Testis (tissue), 5 donors: ENCODE measurements at regions of chr12 and their contacts with region 1.

Region 1: GRCh38 chr12:27818401-27818918 is 38.4 kb upstream of the MANSC4 start:
- DNase-seq: peak; percentile 81
- H3K4me3 ChIP-seq: no peak overlapping the region
- H3K27ac ChIP-seq: peak overlapping the region; percentile 20 to 68
- H3K4me1 ChIP-seq: peaks cover 29% of the 10 kb centered on the region
- H3K27me3 ChIP-seq: no peaks in the 10 kb centered on the region
- CTCF ChIP-seq: no peak
- POLR2A ChIP-seq: no peak

Region 2: GRCh38 chr12:27747111-27747820 is 71.2 kb before region 1 on chr12:
- intact Hi-C with region 1: loop called (anchors 10 kb)
- DNase-seq: no peak
- H3K4me3 ChIP-seq: no peak overlapping the region
- H3K27ac ChIP-seq: peak overlapping the region; percentile 79 to 81
- H3K4me1 ChIP-seq: peaks cover 36% of the 10 kb centered on the region
- H3K27me3 ChIP-seq: no peaks in the 10 kb centered on the region
- CTCF ChIP-seq: no peak
- POLR2A ChIP-seq: no peak